B cell (primary cell): ENCODE measurements at regions of chr19 and their contacts with region 1.

Region 1: DNA sequence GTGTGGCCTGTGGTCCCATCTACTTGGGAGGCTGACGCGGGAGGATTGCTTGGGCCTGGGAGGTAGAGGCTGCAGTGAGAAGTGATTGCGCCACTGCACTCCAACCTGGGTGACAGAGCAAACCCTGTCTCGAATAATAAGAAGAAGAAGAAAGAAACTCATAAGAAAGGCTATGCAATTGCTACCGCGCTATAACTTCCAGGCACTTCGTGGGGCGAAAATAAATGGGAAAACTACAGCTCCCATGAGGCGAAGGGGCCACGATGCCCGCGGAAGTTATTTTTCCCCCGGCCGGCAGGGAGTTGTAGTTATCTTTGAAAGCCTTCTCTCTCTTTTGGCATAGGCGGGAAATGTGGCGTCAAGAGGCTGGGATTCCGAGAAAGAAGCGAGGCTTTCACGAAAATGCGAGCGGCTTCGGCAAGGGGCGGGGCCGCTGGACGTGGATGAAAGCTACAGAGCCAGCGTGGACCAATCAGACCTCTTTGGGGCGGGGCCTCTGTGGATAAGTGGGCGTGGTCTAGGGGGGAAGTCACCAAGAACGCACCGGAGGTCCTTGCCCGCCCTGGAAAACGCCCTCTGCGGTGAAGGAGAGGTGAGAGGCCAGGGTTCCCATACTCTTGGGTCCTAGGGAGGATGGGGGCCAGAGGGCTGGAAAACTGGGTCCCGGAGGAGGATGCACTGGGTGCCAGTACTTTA is at the start of gene NUCB1:
- DNase-seq: peak; percentile 96
- ATAC-seq: peak; percentile 99
- H3K4me3 ChIP-seq: peak within 1 kb of the TSS; percentile 62 to 95 (median 82)
- H3K4me3 Mint-ChIP-seq: peak within 1 kb of the TSS; percentile 96
- H3K27ac ChIP-seq: peak within 1 kb of the TSS; percentile 61 to 83
- H3K27ac Mint-ChIP-seq: peak within 1 kb of the TSS; percentile 91
- H3K4me1 ChIP-seq: peaks cover 18 to 35% of the 10 kb centered on the region in 2 donors
- H3K4me1 Mint-ChIP-seq: peaks cover 31% of the 10 kb centered on the region
- H3K27me3 ChIP-seq: peaks cover 0 to 25% (median 6%) of the 10 kb centered on the region in 4 experiments
- H3K27me3 Mint-ChIP-seq: peaks cover 11% of the 10 kb centered on the region
- CTCF ChIP-seq: no peak
- total RNA-seq, gene NUCB1: 134 and 136 TPM in 2 replicates

Region 2: DNA sequence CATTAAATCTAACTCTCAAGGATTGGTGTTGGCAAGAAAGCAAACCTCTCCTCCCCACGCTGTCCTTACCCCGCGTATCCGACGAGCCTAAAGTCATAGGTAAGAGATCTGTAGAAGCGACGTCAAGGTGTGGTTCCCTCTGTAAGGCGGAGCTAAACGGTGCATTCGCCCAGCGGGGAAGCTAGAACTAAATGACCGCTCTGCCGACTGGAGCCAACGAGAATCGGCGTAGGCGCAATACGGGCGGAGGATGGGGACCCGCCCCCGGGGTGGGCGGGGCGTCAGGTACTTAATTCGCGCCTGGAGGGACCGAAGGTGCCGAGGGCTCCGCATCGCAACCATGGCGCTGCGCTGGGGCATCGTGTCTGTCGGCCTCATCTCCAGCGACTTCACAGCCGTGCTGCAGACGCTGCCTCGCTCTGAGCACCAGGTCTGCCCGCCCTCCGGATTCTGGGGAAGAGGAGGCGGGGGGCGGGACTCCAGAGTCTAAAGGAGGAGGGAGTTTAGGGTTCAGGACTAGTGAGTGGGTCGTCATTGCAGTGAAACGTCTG is 33.5 kb after region 1 on chr19 and contains the start of gene DHDH:
- CTCF ChIA-PET with region 1: no interaction called
- POLR2A ChIA-PET with region 1: no interaction called
- intact Hi-C with region 1: loop called (anchors 2 kb)
- DNase-seq: peak; percentile 87
- ATAC-seq: peak; percentile 98
- H3K4me3 ChIP-seq: peak within 1 kb of the TSS; percentile 32 to 67 (median 47)
- H3K4me3 Mint-ChIP-seq: peak within 1 kb of the TSS; percentile 91
- H3K27ac ChIP-seq: no peak within 1 kb of the TSS
- H3K27ac Mint-ChIP-seq: peak within 1 kb of the TSS; percentile 41
- H3K4me1 ChIP-seq: peaks cover 12 to 15% of the 10 kb centered on the region in 2 donors
- H3K4me1 Mint-ChIP-seq: peaks cover 11% of the 10 kb centered on the region
- H3K27me3 ChIP-seq: peaks cover 0 to 10% (median 3%) of the 10 kb centered on the region in 4 experiments
- H3K27me3 Mint-ChIP-seq: peaks cover 12% of the 10 kb centered on the region
- CTCF ChIP-seq: no peak
- total RNA-seq, gene DHDH: 0.64 TPM in 1 of 2 replicates, not detected in the other

Region 3: DNA sequence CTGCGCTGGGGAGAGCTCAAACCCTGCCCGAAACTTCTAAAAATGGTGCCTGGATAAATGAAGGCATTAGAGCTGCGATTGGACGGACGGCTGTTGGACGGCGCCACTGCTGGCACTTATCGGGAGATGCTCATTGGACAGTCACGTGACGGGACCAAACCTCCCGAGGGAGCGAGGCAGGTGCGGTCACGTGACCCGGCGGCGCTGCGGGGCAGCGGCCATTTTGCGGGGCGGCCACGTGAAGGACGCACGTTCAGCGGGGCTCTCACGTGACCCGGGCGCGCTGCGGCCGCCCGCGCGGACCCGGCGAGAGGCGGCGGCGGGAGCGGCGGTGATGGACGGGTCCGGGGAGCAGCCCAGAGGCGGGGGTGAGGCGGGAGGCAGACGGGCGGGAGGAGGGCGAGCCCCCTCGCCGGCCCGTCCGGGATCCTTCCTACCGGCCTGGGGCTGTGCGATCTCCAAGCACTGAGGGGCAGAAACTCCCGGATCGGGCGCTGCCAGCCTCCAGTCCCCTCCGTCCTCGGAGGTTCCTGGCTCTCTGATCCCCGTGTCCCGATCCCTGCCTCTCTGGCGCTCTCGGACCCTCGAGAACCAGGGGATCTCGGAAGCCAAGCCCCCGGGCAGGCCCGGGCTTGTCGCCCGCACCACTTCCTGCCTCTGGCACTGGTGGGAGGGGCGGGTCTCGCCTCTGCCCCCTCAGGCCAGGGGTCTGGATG is 54.8 kb after region 1 on chr19 and contains the start of gene BAX:
- CTCF ChIA-PET with region 1: interaction called, 5 read pairs
- POLR2A ChIA-PET with region 1: interaction called, 3 read pairs
- intact Hi-C with region 1: loop called (anchors 1 kb)
- DNase-seq: peak; percentile 92
- ATAC-seq: peak; percentile 88
- H3K4me3 ChIP-seq: peak within 1 kb of the TSS; percentile 47 to 99 (median 87)
- H3K4me3 Mint-ChIP-seq: peak within 1 kb of the TSS; percentile 85
- H3K27ac ChIP-seq: peak within 1 kb of the TSS; percentile 84 to 89
- H3K27ac Mint-ChIP-seq: peak within 1 kb of the TSS; percentile 92
- H3K4me1 ChIP-seq: peaks cover 6 to 16% of the 10 kb centered on the region in 2 donors
- H3K4me1 Mint-ChIP-seq: peaks cover 20% of the 10 kb centered on the region
- H3K27me3 ChIP-seq: no peaks in the 10 kb centered on the region
- H3K27me3 Mint-ChIP-seq: no peaks in the 10 kb centered on the region
- CTCF ChIP-seq: no peak
- total RNA-seq, gene BAX: 92.7 and 95.3 TPM in 2 replicates